IMR-90 (cell line): ENCODE measurements at regions of chr6 and their contacts with region 1.

Region 1: GRCh38 chr6:22880686-22881433 is 311.5 kb downstream of the HDGFL1 start:
- DNase-seq: peak; percentile 99
- ATAC-seq: peak; percentile 91
- H3K4me3 ChIP-seq: no peak overlapping the region
- H3K27ac ChIP-seq: peak overlapping the region; percentile 100; the same call in 1 of the 2 replicates
- H3K4me1 ChIP-seq: peaks cover 16% of the 10 kb centered on the region
- H3K27me3 ChIP-seq: no peaks in the 10 kb centered on the region
- CTCF ChIP-seq: no peak
- POLR2A ChIP-seq: peak; percentile 23; the same call in 1 of the 2 replicates
- RAD21 ChIP-seq: peak; percentile 30

Region 2: GRCh38 chr6:22613695-22614094 is 267.2 kb before region 1 on chr6:
- CTCF ChIA-PET with region 1: no interaction called
- POLR2A ChIA-PET with region 1: no interaction called
- dilution Hi-C with region 1: no loop called
- in situ Hi-C with region 1: no loop called
- intact Hi-C with region 1: loop called (anchors 5 kb)
- DNase-seq: peak; percentile 98
- ATAC-seq: peak; percentile 96
- H3K4me3 ChIP-seq: no peak overlapping the region
- H3K27ac ChIP-seq: no peak overlapping the region
- H3K4me1 ChIP-seq: peaks cover 9% of the 10 kb centered on the region
- H3K27me3 ChIP-seq: no peaks in the 10 kb centered on the region
- CTCF ChIP-seq: no peak
- POLR2A ChIP-seq: no peak
- RAD21 ChIP-seq: no peak

Region 3: GRCh38 chr6:23106951-23107350 is 226.1 kb after region 1 on chr6:
- CTCF ChIA-PET with region 1: no interaction called
- POLR2A ChIA-PET with region 1: no interaction called
- dilution Hi-C with region 1: no loop called
- in situ Hi-C with region 1: no loop called
- intact Hi-C with region 1: loop called (anchors 5 kb)
- DNase-seq: peak; percentile 92
- ATAC-seq: peak; percentile 97
- H3K4me3 ChIP-seq: no peak overlapping the region
- H3K27ac ChIP-seq: no peak overlapping the region
- H3K4me1 ChIP-seq: peaks cover 2% of the 10 kb centered on the region; the same call in 1 of the 2 replicates
- H3K27me3 ChIP-seq: no peaks in the 10 kb centered on the region
- CTCF ChIP-seq: no peak
- POLR2A ChIP-seq: no peak
- RAD21 ChIP-seq: no peak

Region 4: GRCh38 chr6:23174781-23175361 is 294.0 kb after region 1 on chr6:
- CTCF ChIA-PET with region 1: no interaction called
- POLR2A ChIA-PET with region 1: no interaction called
- dilution Hi-C with region 1: no loop called
- in situ Hi-C with region 1: no loop called
- intact Hi-C with region 1: loop called (anchors 1 kb)
- DNase-seq: peak; percentile 97
- ATAC-seq: peak; percentile 89
- H3K4me3 ChIP-seq: no peak overlapping the region
- H3K27ac ChIP-seq: peak overlapping the region; percentile 92; the same call in 1 of the 2 replicates
- H3K4me1 ChIP-seq: peaks cover 10% of the 10 kb centered on the region
- H3K27me3 ChIP-seq: no peaks in the 10 kb centered on the region
- CTCF ChIP-seq: no peak
- POLR2A ChIP-seq: no peak
- RAD21 ChIP-seq: no peak; the same call in 1 of the 2 replicates

Region 5: GRCh38 chr6:23414051-23414446 is 533.2 kb after region 1 on chr6:
- CTCF ChIA-PET with region 1: interaction called, 3 read pairs
- POLR2A ChIA-PET with region 1: no interaction called
- dilution Hi-C with region 1: no loop called
- in situ Hi-C with region 1: no loop called
- intact Hi-C with region 1: loop called (anchors 1 kb)
- DNase-seq: peak; percentile 92
- ATAC-seq: peak; percentile 87
- H3K4me3 ChIP-seq: no peak overlapping the region
- H3K27ac ChIP-seq: peak overlapping the region; percentile 82
- H3K4me1 ChIP-seq: peaks cover 6% of the 10 kb centered on the region
- H3K27me3 ChIP-seq: no peaks in the 10 kb centered on the region
- CTCF ChIP-seq: peak; percentile 60
- POLR2A ChIP-seq: no peak
- RAD21 ChIP-seq: peak; percentile 63

Region 6: DNA sequence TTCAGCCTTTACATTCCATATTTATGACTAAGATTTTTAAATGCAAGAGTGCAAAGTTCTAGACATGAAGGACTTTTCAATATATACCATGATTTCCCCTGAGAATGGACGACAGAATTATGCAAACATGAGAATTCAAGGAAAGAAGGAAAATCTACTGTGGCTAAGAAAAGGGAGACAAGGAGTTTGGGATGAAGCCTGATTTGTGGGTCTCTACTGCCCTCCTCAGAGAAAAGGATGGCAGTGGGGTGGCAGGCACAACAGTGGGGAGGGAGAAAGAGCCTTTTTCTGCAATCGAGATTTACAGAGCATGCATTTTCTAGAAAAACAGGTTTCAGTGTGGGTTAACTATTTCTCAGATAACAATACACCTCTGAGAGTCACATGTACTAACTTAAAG is 778.3 kb after region 1 on chr6:
- CTCF ChIA-PET with region 1: no interaction called
- POLR2A ChIA-PET with region 1: no interaction called
- dilution Hi-C with region 1: no loop called
- in situ Hi-C with region 1: no loop called
- intact Hi-C with region 1: loop called (anchors 10 kb)
- DNase-seq: peak; percentile 6
- ATAC-seq: peak; percentile 72
- H3K4me3 ChIP-seq: no peak overlapping the region
- H3K27ac ChIP-seq: no peak overlapping the region
- H3K4me1 ChIP-seq: no peaks in the 10 kb centered on the region
- H3K27me3 ChIP-seq: no peaks in the 10 kb centered on the region
- CTCF ChIP-seq: 0 out of 2 replicates have a peak, but pooled peaks have one; percentile 2
- POLR2A ChIP-seq: no peak
- RAD21 ChIP-seq: no peak